ENCODE measurements at regions of chr7 and their contacts with region 1.

Region 1: GRCh38 chr7:10939911-10940703 is 33.6 kb upstream of the PHF14 start:
- DNase-seq: peak; percentile 95 to 96 (median 96)
- ATAC-seq: peak; percentile 92
- H3K4me3 ChIP-seq: peak overlapping the region; percentile 93
- H3K27ac ChIP-seq: peak overlapping the region; percentile 94
- H3K4me1 ChIP-seq: peaks cover 5 to 11% of the 10 kb centered on the region in 2 experiments; a peak in 4 of 5 replicates
- H3K27me3 ChIP-seq: no peaks in the 10 kb centered on the region
- CTCF ChIP-seq: no peak; a peak in 1 of 6 replicates
- EP300 ChIP-seq: peak; percentile 51; the same call in 1 of the 2 replicates
- POLR2A ChIP-seq: peak; percentile 99
- RAD21 ChIP-seq: peak in 1 of 2 experiments; percentile 8; a peak in 1 of 4 replicates

Region 2: GRCh38 chr7:10779465-10780399 is 160.4 kb before region 1 on chr7:
- CTCF ChIA-PET with region 1: no interaction called
- POLR2A ChIA-PET with region 1: no interaction called
- in situ Hi-C with region 1: no loop called
- intact Hi-C with region 1: loop called (anchors 2 kb)
- DNase-seq: peak; percentile 61 to 89 (median 70)
- ATAC-seq: peak; percentile 79
- H3K4me3 ChIP-seq: peak overlapping the region; percentile 50
- H3K27ac ChIP-seq: peak overlapping the region; percentile 94
- H3K4me1 ChIP-seq: peaks cover 3 to 12% of the 10 kb centered on the region in 2 experiments; a peak in 4 of 5 replicates
- H3K27me3 ChIP-seq: no peaks in the 10 kb centered on the region
- CTCF ChIP-seq: peak in 1 of 3 experiments; percentile 17; a peak in 2 of 6 replicates
- EP300 ChIP-seq: no peak
- POLR2A ChIP-seq: peak; percentile 84
- RAD21 ChIP-seq: no peak

Region 3: DNA sequence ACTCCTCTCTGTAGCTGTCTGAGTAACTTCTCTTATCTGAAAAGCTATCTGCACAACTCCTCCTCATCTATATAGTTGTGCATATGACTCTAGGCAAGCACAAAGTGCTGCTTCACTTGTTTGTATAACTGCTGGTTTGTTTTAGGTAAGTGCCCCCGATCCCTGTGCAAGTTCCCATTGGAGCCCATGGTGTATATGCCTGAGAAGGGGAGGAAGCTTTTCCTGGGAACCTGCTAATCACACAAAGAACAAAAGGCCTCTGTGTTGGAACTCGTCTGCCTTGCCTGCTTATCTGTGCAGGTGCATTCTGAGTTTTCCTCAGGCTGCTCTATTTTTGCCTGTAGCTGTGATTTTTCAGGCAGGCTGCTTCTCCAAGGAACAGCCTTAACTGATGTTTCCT is 10.4 kb after region 1 on chr7:
- CTCF ChIA-PET with region 1: no interaction called
- POLR2A ChIA-PET with region 1: interaction called, 12 read pairs
- in situ Hi-C with region 1: no loop called
- intact Hi-C with region 1: no loop called
- DNase-seq: no peak
- ATAC-seq: no peak
- H3K4me3 ChIP-seq: no peak overlapping the region
- H3K27ac ChIP-seq: no peak overlapping the region
- H3K4me1 ChIP-seq: no peaks in the 10 kb centered on the region
- H3K27me3 ChIP-seq: no peaks in the 10 kb centered on the region
- CTCF ChIP-seq: no peak
- EP300 ChIP-seq: no peak
- POLR2A ChIP-seq: no peak
- RAD21 ChIP-seq: no peak

Region 4: GRCh38 chr7:10973061-10973944 is 33.2 kb after region 1 on chr7 and contains the start of gene PHF14:
- CTCF ChIA-PET with region 1: no interaction called
- POLR2A ChIA-PET with region 1: interaction called, 6 read pairs
- in situ Hi-C with region 1: no loop called
- intact Hi-C with region 1: loop called (anchors 1 kb)
- DNase-seq: peak; percentile 95 to 98 (median 96)
- ATAC-seq: peak; percentile 98
- H3K4me3 ChIP-seq: peak within 1 kb of the TSS; percentile 65
- H3K27ac ChIP-seq: peak within 1 kb of the TSS; percentile 93
- H3K4me1 ChIP-seq: peaks cover 0 to 3% of the 10 kb centered on the region in 2 experiments; a peak in 1 of 5 replicates
- H3K27me3 ChIP-seq: no peaks in the 10 kb centered on the region
- CTCF ChIP-seq: no peak
- EP300 ChIP-seq: no peak; the same call in 1 of the 2 replicates
- POLR2A ChIP-seq: peak; percentile 90
- RAD21 ChIP-seq: 0 out of 4 replicates have a peak, but pooled peaks of 1 of the 2 experiments have one; percentile 15
- polyA plus RNA-seq, gene PHF14: 27.5 to 27.9 TPM

Region 5: DNA sequence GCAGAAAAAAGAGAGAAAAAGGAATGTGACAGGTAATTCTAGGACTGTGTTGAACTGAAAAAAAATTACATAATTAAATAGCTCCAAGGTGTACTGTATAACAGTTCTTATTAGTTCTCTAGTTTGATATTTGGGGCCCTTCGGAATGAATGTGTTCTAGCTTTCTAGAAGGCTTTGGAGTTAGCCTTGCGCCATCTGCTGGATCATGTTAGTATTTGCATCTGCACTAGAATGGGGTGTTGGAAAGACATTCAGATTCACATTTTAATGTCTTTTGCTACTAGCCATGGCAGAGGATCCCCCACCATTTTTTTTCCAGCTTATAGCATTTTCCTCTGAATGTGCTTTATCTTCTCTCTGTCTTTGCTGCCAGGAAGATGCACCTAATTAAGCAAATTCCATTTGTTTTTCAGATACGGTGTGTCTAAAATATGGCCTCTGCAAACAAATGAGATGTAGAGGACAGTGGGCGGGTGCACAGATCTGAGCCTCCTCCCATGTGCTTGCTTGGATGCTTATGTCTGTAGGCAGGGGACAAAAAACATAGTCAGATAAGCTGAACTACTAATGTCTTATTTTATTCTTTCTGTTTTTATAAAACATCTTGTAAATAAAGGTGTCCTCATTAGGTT is 272.1 kb after region 1 on chr7:
- CTCF ChIA-PET with region 1: no interaction called
- POLR2A ChIA-PET with region 1: no interaction called
- in situ Hi-C with region 1: no loop called
- intact Hi-C with region 1: loop called (anchors 10 kb)
- DNase-seq: peak; percentile 43 to 76 (median 50)
- ATAC-seq: peak; percentile 91
- H3K4me3 ChIP-seq: no peak overlapping the region
- H3K27ac ChIP-seq: no peak overlapping the region
- H3K4me1 ChIP-seq: no peaks in the 10 kb centered on the region
- H3K27me3 ChIP-seq: peaks cover 11 to 15% of the 10 kb centered on the region in 2 experiments
- CTCF ChIP-seq: peak; percentile 61 to 76 (median 75)
- EP300 ChIP-seq: no peak
- POLR2A ChIP-seq: no peak
- RAD21 ChIP-seq: peak; percentile 76 to 85

Measured in K562 (cell line).